BJ (cell line): ENCODE measurements at regions of chr3 and their contacts with region 1.

Region 1: GRCh38 chr3:100850701-100851100 is 141.4 kb downstream of the TFG start:
- DNase-seq: no peak
- H3K4me3 ChIP-seq: no peak overlapping the region
- H3K27me3 ChIP-seq: no peaks in the 10 kb centered on the region
- CTCF ChIP-seq: no peak

Region 2: GRCh38 chr3:100725935-100726513 is 124.7 kb before region 1 on chr3:
- CTCF ChIA-PET with region 1: no interaction called
- POLR2A ChIA-PET with region 1: interaction called, 14 read pairs
- DNase-seq: no peak
- H3K4me3 ChIP-seq: no peak overlapping the region
- H3K27me3 ChIP-seq: no peaks in the 10 kb centered on the region
- CTCF ChIP-seq: no peak

Region 3: DNA sequence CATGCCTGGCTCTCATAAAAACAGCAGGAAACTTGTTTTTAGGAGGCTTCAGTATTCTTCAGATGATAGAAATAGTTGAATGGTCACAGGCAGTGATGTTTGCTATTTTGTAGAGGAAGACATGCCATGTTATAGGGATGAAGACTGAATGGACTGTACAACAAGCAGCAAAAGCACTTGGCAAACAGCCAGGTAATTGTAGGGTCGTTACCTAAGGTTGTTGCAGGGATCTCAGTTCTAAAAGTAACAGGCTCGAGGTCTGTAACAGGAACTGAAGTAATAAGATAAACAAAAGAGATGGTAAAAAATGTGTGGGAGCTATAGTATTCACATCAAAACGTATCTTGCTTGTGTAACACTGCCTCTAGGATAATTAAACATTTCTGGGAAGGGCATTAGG is 25.1 kb before region 1 on chr3:
- CTCF ChIA-PET with region 1: no interaction called
- POLR2A ChIA-PET with region 1: no interaction called
- DNase-seq: no peak
- H3K4me3 ChIP-seq: no peak overlapping the region
- H3K27me3 ChIP-seq: 0 out of 2 replicates have a peak, but pooled peaks cover 2% of the 10 kb centered on the region
- CTCF ChIP-seq: no peak

Region 4: DNA sequence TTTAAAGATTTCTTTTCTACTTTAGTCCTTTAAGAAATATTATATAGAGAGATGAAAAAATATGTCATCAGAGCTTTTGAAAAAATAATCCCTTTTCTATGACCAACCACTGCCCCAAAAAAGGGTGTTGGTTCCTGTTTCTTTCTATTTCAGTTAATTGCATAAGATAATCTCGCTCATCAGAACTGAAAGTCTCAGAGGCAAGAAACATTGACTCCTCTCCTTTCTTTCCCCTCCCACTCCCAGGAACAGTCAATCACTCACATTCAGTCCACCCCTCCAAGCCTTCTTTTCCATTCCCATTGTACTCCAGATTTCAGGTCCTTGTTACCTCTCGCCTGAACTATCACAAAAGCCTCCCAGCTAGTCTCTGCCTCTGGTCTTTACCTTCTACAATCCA is 296.2 kb after region 1 on chr3:
- CTCF ChIA-PET with region 1: no interaction called
- POLR2A ChIA-PET with region 1: no interaction called
- DNase-seq: no peak
- H3K4me3 ChIP-seq: no peak overlapping the region
- H3K27me3 ChIP-seq: no peaks in the 10 kb centered on the region
- CTCF ChIP-seq: no peak